Sigmoid colon (tissue), 7 donors: ENCODE measurements at regions of chr12 and their contacts with region 1.

Region 1: GRCh38 chr12:131830335-131830913 is 2.2 kb downstream of the MMP17 start:
- DNase-seq: peak; percentile 92
- H3K4me3 ChIP-seq: peak overlapping the region; percentile 17 to 60 (median 46)
- H3K27ac ChIP-seq: peak overlapping the region; percentile 63 to 80 (median 74)
- H3K4me1 ChIP-seq: peaks cover 0 to 50% (median 44%) of the 10 kb centered on the region in 4 donors
- H3K27me3 ChIP-seq: peaks cover 21 to 76% (median 67%) of the 10 kb centered on the region in 3 donors
- CTCF ChIP-seq: peak in 2 of 4 experiments; percentile 39 to 44
- EP300 ChIP-seq: no peak
- POLR2A ChIP-seq: no peak

Region 2: DNA sequence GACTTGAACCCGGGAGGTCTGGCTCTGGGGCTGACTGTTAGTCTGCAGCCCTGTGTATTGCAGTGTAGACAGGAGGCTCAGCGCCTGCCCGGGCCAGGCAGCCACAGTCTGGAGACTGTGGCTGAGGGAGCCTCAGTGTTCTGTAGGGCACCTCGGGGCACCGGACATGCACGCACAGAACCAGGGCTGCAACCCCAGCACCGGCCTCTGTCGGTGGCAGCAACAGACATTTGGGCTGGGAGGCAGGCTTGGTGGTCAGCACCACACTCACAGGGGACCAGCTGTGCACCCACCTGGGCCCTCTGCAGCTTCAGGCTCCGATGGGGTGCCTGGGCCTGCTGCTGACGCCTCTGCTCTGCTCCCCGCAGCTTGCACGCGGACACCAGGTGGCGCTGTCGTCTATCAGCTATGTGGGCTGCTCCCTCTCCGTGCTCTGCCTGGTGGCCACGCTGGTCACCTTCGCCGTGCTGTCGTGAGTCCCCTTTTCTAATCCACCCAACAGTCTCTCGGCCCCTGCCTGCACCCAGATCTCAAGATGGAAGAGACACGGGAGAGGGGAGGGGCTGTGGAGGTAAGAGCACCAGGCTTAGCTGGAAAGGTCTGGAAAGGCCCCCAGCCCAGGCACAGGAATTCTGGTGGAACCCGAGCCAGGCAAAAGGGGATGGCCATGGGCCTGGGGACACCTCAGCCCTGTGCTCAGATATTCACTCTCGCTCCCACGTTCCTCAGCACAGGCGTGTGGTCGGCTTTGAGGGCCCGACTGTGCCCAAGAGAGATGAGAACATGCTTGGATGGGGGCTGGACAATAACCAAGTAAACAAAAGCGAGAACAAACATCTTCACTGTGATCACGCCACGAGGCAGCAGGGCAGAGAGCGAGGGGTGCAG is 725.7 kb before region 1 on chr12:
- intact Hi-C with region 1: loop called (anchors 10 kb)
- DNase-seq: peak; percentile 91
- H3K4me3 ChIP-seq: no peak overlapping the region
- H3K27ac ChIP-seq: no peak overlapping the region
- H3K4me1 ChIP-seq: peaks cover 0 to 12% (median 7%) of the 10 kb centered on the region in 4 donors
- H3K27me3 ChIP-seq: no peaks in the 10 kb centered on the region
- CTCF ChIP-seq: peak; percentile 81 to 94 (median 90)
- EP300 ChIP-seq: no peak
- POLR2A ChIP-seq: no peak

Region 3: DNA sequence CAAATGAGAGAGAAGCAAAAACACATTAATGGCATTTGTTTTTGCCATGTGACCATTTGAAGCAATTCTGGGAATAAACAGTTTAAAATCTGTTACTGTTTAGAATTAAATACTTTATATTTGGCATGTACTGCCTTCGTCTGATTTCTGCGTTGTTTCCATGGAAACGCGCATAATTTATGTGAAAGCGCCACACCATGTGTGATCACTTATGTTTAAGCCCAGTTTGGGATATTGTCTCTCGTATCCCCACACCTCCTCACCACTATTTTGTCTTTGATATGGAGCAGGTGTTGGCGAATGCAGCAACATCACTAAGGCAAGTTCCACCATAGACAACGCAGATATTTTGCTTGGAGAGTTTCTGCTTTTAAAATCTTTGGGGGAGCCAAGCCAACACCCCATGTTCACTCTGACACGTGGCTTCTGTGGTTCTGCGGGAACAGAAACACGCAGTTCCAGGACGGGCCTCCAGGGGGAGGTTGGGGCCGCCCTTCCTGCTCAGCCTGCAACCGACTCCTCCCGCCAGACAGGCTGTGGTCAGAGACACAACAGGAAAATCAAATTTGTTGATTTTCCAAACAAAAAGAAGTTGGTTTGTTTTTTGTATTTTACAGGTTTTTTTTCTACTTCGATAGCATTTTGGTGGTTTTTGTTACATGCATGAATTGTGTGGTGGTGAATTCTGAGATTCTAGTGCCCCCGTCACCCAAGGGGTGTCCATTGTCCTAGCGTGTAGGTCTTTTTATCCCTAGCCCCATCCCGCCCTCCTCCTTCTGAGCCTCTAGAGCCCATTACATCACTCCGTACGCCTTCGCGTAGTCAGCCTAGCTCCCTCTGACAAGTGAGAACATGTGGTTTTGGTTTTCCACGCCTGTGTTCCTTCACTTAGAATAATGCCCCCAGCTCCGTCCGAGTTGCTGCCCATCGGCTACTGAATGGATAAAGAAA is 221.4 kb before region 1 on chr12:
- intact Hi-C with region 1: loop called (anchors 5 kb)
- DNase-seq: peak; percentile 84
- H3K4me3 ChIP-seq: no peak overlapping the region
- H3K27ac ChIP-seq: peak overlapping the region in 1 of 4 donors; percentile 6
- H3K4me1 ChIP-seq: no peaks in the 10 kb centered on the region
- H3K27me3 ChIP-seq: peaks cover 0 to 36% (median 12%) of the 10 kb centered on the region in 3 donors
- CTCF ChIP-seq: peak; percentile 8 to 71 (median 70)
- EP300 ChIP-seq: no peak
- POLR2A ChIP-seq: no peak

Region 4: GRCh38 chr12:131720921-131721320 is 109.5 kb before region 1 on chr12:
- intact Hi-C with region 1: no loop called
- DNase-seq: no peak
- H3K4me3 ChIP-seq: no peak overlapping the region
- H3K27ac ChIP-seq: no peak overlapping the region
- H3K4me1 ChIP-seq: no peaks in the 10 kb centered on the region
- H3K27me3 ChIP-seq: no peaks in the 10 kb centered on the region
- CTCF ChIP-seq: no peak
- EP300 ChIP-seq: no peak
- POLR2A ChIP-seq: no peak

Region 5: DNA sequence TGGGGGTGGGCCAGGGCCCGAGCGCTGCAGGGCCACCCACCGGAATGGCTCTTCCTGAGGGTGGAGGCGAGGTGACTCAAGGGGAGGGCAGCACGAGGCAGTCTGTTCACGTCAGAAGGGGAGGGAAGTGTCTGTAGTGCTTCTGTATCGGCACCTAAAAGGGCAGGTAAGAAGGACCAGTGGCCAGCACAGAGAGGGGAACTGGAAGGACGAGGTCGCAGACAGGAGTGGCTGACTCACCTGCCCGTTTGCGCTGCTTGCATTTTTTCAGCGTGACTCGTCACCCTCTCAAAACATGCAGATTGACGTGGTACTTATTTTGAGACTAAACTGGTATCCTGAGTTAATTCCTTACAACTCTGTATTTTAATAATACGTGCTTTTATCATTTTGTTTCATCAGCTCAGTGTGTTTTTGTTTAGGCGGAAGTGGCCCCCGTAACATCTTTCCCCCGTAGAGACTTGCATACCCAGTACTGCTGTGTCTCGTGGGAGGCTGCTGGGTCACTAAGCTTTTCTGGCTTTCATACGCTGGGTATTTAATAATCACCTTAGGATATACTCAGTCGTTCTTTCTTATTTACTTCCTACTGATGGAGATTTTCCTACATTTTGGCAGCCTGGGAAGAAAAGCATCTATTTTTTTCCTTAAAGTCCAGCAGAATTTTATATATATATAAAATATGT is 93.1 kb before region 1 on chr12:
- intact Hi-C with region 1: loop called (anchors 2 kb)
- DNase-seq: no peak
- H3K4me3 ChIP-seq: no peak overlapping the region
- H3K27ac ChIP-seq: peak overlapping the region in 3 of 4 donors; percentile 4 to 37 (median 8)
- H3K4me1 ChIP-seq: no peaks in the 10 kb centered on the region
- H3K27me3 ChIP-seq: no peaks in the 10 kb centered on the region
- CTCF ChIP-seq: no peak
- EP300 ChIP-seq: no peak
- POLR2A ChIP-seq: no peak

Region 6: DNA sequence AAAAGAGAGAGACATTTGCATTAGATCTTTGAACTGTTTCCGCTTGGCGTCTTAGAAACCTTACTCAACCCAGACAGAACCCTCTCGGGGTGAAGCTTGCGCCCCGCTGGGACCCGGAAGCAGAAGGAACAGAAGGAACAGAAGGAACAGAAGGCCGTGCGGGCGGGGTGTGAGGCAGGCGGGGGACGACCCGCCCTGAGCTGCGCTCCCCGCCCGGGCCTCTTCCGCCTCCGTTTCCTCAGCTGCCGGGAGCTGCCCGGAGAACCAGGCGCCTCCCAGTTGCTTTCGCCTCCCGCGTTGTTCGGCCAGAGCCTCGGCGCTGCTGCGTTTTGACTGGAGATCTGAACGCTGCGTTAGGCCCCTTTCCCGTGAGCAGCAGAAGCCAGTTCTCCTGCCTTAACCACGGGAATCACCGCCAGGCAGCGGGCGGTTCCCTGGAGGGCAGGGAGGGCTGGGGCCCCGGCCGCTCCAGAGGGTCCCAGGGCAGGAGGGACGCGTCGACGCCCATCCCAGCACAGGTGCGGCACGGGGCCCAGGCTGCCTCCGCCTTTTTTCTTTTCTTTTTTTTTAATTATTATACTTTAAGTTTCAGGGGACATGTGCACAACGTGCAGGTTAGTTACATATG is 21.6 kb before region 1 on chr12:
- intact Hi-C with region 1: no loop called
- DNase-seq: no peak
- H3K4me3 ChIP-seq: peak overlapping the region in 1 of 4 donors; percentile 26
- H3K27ac ChIP-seq: no peak overlapping the region
- H3K4me1 ChIP-seq: peaks cover 0 to 7% (median 5%) of the 10 kb centered on the region in 4 donors
- H3K27me3 ChIP-seq: no peaks in the 10 kb centered on the region
- CTCF ChIP-seq: no peak
- EP300 ChIP-seq: no peak
- POLR2A ChIP-seq: no peak

Region 7: DNA sequence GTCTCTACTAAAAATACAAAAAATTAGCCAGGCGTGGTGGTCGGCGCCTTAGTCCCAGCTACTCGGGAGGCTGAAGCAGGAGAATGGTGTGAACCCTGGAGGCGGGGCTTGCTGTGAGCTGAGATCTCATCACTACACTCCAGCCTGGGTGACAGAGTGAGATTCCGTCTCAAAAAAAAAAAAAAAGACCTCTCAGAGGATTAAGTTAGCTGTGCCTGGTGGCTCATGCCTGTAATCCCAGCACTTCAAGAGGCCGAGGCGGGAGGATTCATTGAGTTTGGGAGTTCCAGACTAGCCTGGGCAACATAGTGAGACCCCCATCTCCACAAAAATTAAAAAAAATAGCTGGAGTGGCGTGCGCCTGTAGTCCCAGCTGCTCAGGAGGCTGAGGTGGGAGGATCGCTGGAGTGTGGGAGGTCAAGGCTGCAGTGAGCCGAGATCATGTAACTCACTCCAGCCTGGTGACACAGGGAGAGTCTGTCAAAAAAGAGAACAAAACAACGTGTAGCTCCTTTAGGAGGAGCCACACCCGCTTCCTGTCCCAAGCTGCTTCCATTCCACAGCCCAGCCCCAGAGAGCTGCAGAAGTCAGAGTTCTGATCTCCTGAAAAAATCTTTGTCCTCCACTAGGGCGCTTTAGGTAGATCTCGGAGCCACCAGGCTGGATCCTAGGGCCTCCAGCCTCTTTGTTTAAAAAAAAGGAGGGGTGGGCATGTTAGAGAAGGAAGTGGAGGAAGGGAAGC is 52.5 kb after region 1 on chr12:
- intact Hi-C with region 1: no loop called
- DNase-seq: no peak
- H3K4me3 ChIP-seq: no peak overlapping the region
- H3K27ac ChIP-seq: no peak overlapping the region
- H3K4me1 ChIP-seq: no peaks in the 10 kb centered on the region
- H3K27me3 ChIP-seq: no peaks in the 10 kb centered on the region
- CTCF ChIP-seq: no peak
- EP300 ChIP-seq: no peak
- POLR2A ChIP-seq: no peak